Psoas muscle (tissue), 8 donors: ENCODE measurements at regions of chr16 and their contacts with region 1.

Region 1: DNA sequence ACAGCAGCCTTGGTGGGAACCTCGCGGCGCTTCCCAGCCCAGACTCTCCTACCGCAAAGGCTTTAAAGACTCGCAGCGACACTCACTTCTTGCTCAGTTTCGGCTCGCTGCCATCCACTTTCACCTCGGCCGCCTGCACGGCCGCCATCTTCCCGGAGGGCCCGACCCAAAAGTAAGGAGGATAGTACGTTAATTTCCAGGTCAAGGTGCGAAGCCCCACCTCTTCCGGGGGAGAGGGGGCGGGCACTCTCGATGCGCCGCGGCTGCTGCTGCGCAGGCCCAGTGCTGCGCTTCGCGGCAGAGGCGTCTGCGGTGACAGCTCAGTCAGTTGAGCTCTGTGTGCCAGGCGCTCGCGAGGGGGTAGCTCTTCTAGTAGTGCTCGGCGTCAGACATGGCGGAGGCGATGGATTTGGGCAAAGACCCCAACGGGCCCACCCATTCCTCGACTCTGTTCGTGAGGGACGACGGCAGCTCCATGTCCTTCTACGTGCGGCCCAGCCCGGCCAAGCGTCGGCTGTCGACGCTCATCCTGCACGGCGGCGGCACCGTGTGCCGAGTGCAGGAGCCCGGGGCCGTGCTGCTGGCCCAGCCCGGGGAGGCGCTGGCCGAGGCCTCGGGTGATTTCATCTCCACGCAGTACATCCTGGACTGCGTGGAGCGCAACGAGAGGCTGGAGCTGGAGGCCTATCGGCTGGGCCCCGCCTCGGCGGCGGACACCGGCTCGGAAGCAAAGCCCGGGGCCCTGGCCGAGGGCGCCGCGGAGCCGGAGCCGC is at the starts of genes KARS1 and TERF2IP:
- DNase-seq: peak; percentile 92 to 97
- ATAC-seq: peak; percentile 96 to 98 (median 98)
- H3K4me3 ChIP-seq: peak within 1 kb of the TSS; percentile 96
- H3K27ac ChIP-seq: peak within 1 kb of the TSS; percentile 98
- H3K4me1 ChIP-seq: peaks cover 59% of the 10 kb centered on the region
- H3K27me3 ChIP-seq: no peaks in the 10 kb centered on the region
- CTCF ChIP-seq: no peak
- total RNA-seq, gene KARS1: 162 to 185 (median 178) TPM
- total RNA-seq, gene TERF2IP: 48.0 to 59.0 (median 56.6) TPM

Region 2: DNA sequence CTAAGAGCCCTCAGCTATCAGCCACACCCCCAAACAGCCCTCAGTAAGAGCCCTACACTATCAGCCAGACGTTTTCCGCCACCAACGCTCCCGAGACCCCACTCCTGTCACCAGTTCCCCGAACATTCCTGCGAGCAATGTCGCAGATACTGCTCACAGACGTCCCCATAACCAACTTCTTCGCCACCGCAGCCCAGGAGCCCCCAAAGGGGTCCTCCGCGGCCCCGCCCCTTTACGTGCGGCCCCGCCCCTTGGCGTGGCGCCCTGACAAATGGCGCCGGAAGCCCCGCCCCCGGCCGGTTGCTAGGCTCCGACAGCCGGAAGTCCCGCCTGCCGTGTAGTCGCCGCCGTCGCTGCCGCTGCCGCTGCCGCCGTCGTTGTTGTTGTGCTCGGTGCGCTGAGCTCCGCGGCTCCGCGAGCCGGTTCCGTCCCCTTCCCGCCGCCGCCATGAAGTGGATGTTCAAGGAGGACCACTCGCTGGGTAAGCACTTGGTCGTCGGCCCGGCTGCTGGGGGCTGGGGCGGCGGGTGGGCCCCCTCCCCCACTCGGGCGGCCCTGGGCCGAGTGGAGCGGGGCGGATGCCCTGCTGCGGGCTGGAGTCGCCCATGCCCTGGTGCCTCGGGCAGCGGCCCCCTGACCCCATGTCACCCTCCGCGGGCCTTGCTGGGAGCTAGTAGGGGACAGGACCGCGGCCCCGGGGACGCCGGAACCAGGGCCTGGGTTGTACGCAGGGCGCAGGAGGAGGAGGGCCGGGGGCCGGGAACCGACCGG is 81.5 kb before region 1 on chr16 and contains the start of gene GABARAPL2:
- intact Hi-C with region 1: loop called in 1 of 2 experiments (anchors 5 kb)
- DNase-seq: peak; percentile 83 to 92
- ATAC-seq: peak; percentile 88 to 95 (median 92)
- H3K4me3 ChIP-seq: peak within 1 kb of the TSS; percentile 99
- H3K27ac ChIP-seq: peak within 1 kb of the TSS; percentile 90
- H3K4me1 ChIP-seq: peaks cover 47% of the 10 kb centered on the region
- H3K27me3 ChIP-seq: no peaks in the 10 kb centered on the region
- CTCF ChIP-seq: no peak
- total RNA-seq, gene GABARAPL2: 107 to 180 (median 148) TPM